AG04450 (cell line): ENCODE measurements at regions of chr10 and their contacts with region 1.

Region 1: DNA sequence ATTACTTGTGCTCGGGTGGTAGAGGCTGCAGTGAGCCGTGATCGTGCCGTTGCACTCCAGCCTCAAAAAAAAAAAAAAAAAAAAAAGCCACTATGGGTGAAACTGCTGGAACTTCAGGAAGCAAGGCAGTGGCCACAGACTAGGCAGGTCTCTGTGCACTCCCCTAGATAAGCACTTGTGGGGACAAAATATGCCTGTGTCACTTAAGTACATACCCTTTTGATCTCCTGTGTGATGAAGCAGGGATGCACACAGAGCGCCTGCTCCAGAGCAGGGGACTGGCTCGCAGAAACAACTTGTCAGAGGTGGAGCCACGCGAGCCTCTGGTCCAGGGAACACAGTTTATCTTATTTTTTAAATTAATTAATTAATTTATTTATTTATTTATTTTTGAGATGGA is 42.9 kb upstream of the PSAP start:
- DNase-seq: no peak
- H3K4me3 ChIP-seq: no peak overlapping the region
- H3K27ac ChIP-seq: no peak overlapping the region
- H3K27me3 ChIP-seq: peaks cover 5% of the 10 kb centered on the region
- CTCF ChIP-seq: no peak

Region 2: GRCh38 chr10:71314028-71314693 is 579.8 kb before region 1 on chr10:
- CTCF ChIA-PET with region 1: interaction called, 10 read pairs
- POLR2A ChIA-PET with region 1: no interaction called
- DNase-seq: no peak
- H3K4me3 ChIP-seq: no peak overlapping the region
- H3K27ac ChIP-seq: no peak overlapping the region
- H3K27me3 ChIP-seq: peaks cover 14% of the 10 kb centered on the region
- CTCF ChIP-seq: peak; percentile 79

Region 3: GRCh38 chr10:71589617-71590551 is 304.0 kb before region 1 on chr10:
- CTCF ChIA-PET with region 1: no interaction called
- POLR2A ChIA-PET with region 1: no interaction called
- DNase-seq: no peak
- H3K4me3 ChIP-seq: no peak overlapping the region
- H3K27ac ChIP-seq: no peak overlapping the region
- H3K27me3 ChIP-seq: peaks cover 17% of the 10 kb centered on the region
- CTCF ChIP-seq: no peak

Region 4: DNA sequence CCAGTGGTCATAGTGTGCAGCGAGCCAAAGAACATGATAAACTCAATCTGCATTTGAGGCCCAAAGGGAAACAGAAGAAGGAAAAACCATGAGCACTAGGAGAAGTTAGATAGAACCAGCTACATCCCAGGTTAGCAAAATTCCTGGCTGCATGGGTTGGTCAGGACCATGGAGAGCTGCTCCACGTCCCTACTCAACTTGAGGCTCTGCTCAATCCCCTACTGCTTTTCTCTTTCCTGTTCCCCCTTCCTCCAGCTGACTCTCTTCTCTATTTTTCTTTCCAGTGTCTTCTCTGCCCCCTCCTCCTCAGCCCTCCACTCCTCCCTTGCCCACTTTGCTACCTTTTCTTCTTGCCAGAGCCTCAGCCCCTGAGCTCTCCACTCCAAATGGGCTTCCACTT is 98.7 kb before region 1 on chr10:
- CTCF ChIA-PET with region 1: no interaction called
- POLR2A ChIA-PET with region 1: no interaction called
- DNase-seq: no peak
- H3K4me3 ChIP-seq: no peak overlapping the region
- H3K27ac ChIP-seq: no peak overlapping the region
- H3K27me3 ChIP-seq: peaks cover 9% of the 10 kb centered on the region
- CTCF ChIP-seq: no peak

Region 5: GRCh38 chr10:71860243-71861029 is 33.5 kb before region 1 on chr10:
- CTCF ChIA-PET with region 1: interaction called, 11 read pairs
- POLR2A ChIA-PET with region 1: no interaction called
- DNase-seq: peak; percentile 100
- H3K4me3 ChIP-seq: no peak overlapping the region
- H3K27ac ChIP-seq: peak overlapping the region; percentile 98
- H3K27me3 ChIP-seq: no peaks in the 10 kb centered on the region
- CTCF ChIP-seq: no peak

Region 6: GRCh38 chr10:71921324-71922027 is 27.6 kb after region 1 on chr10:
- CTCF ChIA-PET with region 1: interaction called, 12 read pairs
- POLR2A ChIA-PET with region 1: no interaction called
- DNase-seq: no peak
- H3K4me3 ChIP-seq: no peak overlapping the region
- H3K27ac ChIP-seq: no peak overlapping the region
- H3K27me3 ChIP-seq: peaks cover 8% of the 10 kb centered on the region
- CTCF ChIP-seq: no peak

Region 7: GRCh38 chr10:72038458-72039001 is 144.6 kb after region 1 on chr10:
- CTCF ChIA-PET with region 1: interaction called, 168 read pairs
- POLR2A ChIA-PET with region 1: no interaction called
- DNase-seq: no peak
- H3K4me3 ChIP-seq: no peak overlapping the region
- H3K27ac ChIP-seq: no peak overlapping the region
- H3K27me3 ChIP-seq: no peaks in the 10 kb centered on the region
- CTCF ChIP-seq: no peak

Region 8: DNA sequence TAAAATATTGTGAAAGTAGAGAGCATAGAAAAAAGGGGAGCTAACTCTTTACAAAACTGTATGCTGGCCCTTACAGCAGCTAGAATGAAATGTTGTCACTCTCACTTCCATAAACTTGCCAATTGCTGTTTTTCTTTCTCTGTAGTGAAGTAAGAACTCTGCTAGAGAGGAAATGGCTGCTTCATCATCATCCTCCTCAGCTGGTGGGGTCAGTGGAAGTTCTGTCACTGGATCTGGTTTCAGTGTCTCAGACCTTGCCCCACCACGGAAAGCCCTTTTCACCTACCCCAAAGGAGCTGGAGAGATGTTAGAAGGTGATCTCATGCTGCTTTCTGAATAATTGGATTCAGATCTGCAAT is 329.8 kb after region 1 on chr10:
- CTCF ChIA-PET with region 1: interaction called, 16 read pairs
- POLR2A ChIA-PET with region 1: no interaction called
- DNase-seq: no peak
- H3K4me3 ChIP-seq: no peak overlapping the region
- H3K27ac ChIP-seq: no peak overlapping the region
- H3K27me3 ChIP-seq: no peaks in the 10 kb centered on the region
- CTCF ChIP-seq: no peak

Region 9: DNA sequence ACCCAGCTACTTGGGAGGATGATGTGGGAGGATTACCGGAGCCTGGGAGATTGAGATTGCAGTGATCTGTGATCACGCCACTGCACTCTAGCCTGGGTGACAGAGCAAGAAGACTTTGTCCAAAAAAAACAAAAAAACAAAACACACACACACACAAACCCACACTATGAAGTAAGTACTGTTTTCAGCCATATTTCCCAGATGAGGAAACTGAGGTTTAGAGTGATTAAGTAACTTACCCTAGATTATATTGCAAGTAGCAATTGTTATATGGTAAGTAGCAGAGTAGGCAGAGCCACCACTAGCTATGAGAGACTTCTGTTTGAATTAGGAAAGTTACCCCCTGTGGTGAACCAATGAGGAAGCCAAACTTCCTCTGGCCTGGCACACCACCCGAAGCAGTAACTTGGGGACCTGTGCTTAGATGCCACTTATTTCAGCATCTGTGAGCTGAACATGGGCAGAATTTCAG is 859.9 kb after region 1 on chr10:
- CTCF ChIA-PET with region 1: no interaction called
- POLR2A ChIA-PET with region 1: no interaction called
- DNase-seq: no peak
- H3K4me3 ChIP-seq: no peak overlapping the region
- H3K27ac ChIP-seq: no peak overlapping the region
- H3K27me3 ChIP-seq: no peaks in the 10 kb centered on the region
- CTCF ChIP-seq: no peak